Activated T-helper 2 cell treated with anti-CD3 and anti-CD28 coated beads, Interferon-gamma antibody, Interleukin-2, Interleukin-4, amounts not matched to agents 10 μg/mL and 5 μg/mL and 100 μg/mL, durations not matched to agents 14 hours and 24 hours and 36 hours (primary cell): ENCODE measurements at regions of chr6 and their contacts with region 1.

Region 1: GRCh38 chr6:159756508-159756907 is 5.3 kb upstream of the ACAT2 start:
- DNase-seq: no peak
- H3K4me3 Mint-ChIP-seq: no peak overlapping the region
- H3K27ac Mint-ChIP-seq: no peak overlapping the region
- H3K4me1 Mint-ChIP-seq: peaks cover 36% of the 10 kb centered on the region
- H3K27me3 Mint-ChIP-seq: no peaks in the 10 kb centered on the region

Region 2: DNA sequence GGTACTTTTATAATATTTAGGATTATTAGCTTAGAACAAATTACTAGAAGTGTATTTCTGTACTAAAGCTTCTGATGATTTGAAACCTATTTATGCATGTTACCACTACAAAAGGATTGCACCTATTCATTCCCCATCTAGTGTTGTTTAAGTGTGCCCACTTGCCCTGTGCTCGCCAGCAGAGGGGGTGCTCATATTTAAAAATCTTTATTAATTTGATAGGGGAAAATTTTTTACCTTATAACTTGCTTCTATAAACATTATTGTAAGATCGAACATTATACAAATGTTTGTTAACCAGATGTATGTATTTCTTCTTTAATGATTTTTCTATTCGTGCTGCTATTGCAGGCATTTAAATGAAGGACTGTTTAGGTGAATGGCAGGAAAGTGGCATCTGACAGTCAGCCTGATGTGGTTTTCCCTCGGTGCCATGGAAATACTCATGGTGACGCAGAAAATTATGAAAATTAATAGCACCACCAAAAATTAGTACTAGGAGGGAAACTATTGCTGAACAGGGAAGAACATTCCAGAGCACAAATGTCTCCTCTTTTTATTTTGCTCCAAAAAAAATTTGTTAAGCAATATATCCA is 631.4 kb before region 1 on chr6:
- intact Hi-C with region 1: no loop called
- DNase-seq: no peak
- H3K4me3 Mint-ChIP-seq: no peak overlapping the region
- H3K27ac Mint-ChIP-seq: no peak overlapping the region
- H3K4me1 Mint-ChIP-seq: no peaks in the 10 kb centered on the region
- H3K27me3 Mint-ChIP-seq: peaks cover 20% of the 10 kb centered on the region

Region 3: DNA sequence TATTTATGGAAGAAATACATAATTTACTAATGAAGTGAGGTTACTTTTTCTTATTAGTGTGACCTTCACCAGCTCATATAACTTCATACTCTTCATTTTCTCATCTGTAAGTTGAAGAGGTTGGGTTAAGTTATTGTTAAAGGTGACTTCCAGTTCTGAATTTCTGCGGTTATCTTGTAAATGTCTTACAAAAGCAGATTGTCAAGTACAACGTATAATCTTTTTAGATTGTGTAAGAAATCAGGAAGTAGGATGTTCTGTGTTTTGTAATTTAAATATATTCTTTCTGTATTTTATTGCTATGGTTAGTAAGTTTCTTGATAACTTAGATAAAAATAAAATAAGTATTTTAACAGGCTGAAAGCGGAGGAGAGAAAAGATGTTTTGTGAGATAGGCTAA is 17.2 kb before region 1 on chr6:
- intact Hi-C with region 1: loop called (anchors 2 kb)
- DNase-seq: no peak
- H3K4me3 Mint-ChIP-seq: no peak overlapping the region
- H3K27ac Mint-ChIP-seq: no peak overlapping the region
- H3K4me1 Mint-ChIP-seq: peaks cover 13% of the 10 kb centered on the region
- H3K27me3 Mint-ChIP-seq: no peaks in the 10 kb centered on the region

Region 4: DNA sequence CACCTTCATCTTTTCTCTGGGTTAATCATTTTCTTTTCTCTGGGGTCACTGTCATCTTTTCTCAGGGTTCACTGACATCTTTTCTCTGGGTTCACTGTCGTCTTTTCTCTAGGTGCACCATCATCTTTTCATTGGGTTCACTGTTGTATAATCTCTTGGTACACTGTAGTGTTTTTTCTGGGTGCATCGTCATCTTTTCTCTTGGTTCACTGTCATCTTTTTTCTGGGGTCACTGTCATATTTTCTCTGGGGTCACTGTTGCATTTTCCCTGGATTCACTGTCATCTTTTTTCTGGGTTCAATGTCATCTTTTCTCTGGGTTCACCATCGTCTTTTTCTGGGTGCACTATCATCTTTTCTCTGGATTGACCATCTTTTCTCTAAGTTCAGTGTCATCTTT is 1089.2 kb after region 1 on chr6:
- intact Hi-C with region 1: no loop called
- DNase-seq: no peak
- H3K4me3 Mint-ChIP-seq: no peak overlapping the region
- H3K27ac Mint-ChIP-seq: no peak overlapping the region
- H3K4me1 Mint-ChIP-seq: no peaks in the 10 kb centered on the region
- H3K27me3 Mint-ChIP-seq: no peaks in the 10 kb centered on the region